GM10248 (cell line): ENCODE measurements at regions of chr9 and their contacts with region 1.

Region 1: GRCh38 chr9:97468658-97469448 is 32.6 kb upstream of the TMOD1 start:
- DNase-seq: peak; percentile 69
- CTCF ChIP-seq: peak; percentile 92

Region 2: DNA sequence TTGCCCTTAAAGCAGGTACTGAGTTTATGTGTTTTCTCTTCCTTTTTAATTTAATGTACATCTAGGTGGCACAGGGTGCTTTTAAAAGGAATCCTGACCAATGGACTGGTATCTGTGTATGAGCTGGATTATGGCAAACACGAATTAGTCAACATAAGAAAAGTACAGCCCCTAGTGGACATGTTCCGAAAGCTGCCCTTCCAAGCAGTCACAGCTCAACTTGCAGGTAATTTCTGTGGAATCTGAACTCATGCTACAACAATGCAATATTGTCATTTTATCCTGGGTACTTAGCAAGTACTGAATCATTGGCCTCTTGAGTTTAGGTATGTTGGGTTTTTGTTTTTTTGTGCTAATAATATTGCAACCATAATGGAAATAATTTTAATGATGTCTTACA is 18.3 kb after region 1 on chr9:
- CTCF ChIA-PET with region 1: interaction called, 74 read pairs
- POLR2A ChIA-PET with region 1: no interaction called
- DNase-seq: no peak
- CTCF ChIP-seq: no peak

Region 3: GRCh38 chr9:97510797-97511761 is 42.2 kb after region 1 on chr9:
- CTCF ChIA-PET with region 1: interaction called, 159 read pairs
- POLR2A ChIA-PET with region 1: no interaction called
- DNase-seq: peak; percentile 62
- CTCF ChIP-seq: no peak

Region 4: DNA sequence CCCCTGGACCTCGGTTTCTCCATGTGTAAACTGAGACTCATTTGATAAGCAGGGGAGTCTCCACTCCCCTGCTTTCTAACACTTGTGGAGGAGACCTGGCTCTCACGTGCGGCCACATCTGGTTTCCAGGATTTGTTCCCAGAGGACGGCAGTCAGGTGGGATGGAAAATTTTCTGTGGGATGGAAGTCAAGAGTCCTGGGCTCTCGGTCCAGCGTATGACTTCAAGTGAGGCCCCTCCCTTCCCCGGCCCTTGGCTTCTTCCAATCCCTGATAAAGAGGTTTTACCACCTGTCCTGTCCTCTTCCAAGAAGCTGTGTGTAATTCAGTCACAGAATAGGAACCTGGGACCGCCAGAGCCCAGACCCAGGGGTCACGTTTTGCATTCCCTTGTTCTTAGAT is 67.6 kb after region 1 on chr9:
- CTCF ChIA-PET with region 1: interaction called, 11 read pairs
- POLR2A ChIA-PET with region 1: no interaction called
- DNase-seq: no peak
- CTCF ChIP-seq: no peak

Region 5: GRCh38 chr9:97564291-97565175 is 95.7 kb after region 1 on chr9:
- CTCF ChIA-PET with region 1: interaction called, 20 read pairs
- POLR2A ChIA-PET with region 1: no interaction called
- DNase-seq: no peak
- CTCF ChIP-seq: no peak

Region 6: DNA sequence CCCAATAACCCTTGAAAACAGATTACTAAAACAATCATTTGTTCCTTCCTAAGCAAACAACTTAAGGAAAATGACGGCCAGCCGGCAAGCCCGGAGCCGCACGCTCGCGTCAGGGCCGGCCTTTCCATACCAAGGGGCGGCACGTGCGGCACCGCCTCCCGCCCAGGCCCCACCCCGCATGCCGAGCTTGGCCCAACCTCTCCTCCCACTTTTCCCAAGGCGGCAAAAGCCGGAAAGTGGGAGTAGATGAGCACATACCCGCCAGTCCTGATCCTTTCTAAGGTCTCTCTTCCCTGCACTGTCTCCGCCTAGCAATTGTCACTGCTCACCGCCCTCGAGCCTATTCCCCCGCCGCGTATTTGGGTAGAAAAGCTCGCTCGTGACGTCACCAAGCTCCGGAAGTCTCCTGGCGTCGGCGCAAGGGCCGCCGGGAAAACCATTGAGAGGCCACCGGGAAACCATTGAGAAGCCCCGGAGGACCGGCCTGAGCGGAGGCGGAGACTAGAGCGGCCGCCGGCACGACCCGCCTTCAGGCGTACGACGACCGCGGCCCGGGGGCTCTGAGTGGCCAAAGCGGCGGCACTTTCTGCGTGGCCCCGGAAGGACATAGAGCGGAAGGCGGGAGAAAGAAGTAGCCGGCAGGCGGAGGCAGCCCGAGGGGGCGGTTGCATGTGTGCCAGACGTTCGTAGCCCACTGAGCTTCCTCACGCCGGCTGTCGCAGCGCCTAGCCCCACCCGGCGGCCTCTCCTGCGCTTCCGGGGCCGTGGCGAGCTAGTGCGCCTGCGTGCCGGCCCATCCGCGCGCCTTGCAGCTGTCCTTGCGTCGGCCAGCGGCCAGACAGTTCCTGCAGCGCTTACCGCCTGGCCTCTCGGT is 164.4 kb after region 1 on chr9 and contains the starts of genes NCBP1 and TSTD2:
- CTCF ChIA-PET with region 1: interaction called, 53 read pairs
- POLR2A ChIA-PET with region 1: no interaction called
- DNase-seq: peak; percentile 94
- CTCF ChIP-seq: no peak